ENCODE measurements at regions of chr9 and their contacts with region 1.

Region 1: GRCh38 chr9:88773627-88774244 is 217.5 kb upstream of the S1PR3 start:
- DNase-seq: no peak

Region 2: DNA sequence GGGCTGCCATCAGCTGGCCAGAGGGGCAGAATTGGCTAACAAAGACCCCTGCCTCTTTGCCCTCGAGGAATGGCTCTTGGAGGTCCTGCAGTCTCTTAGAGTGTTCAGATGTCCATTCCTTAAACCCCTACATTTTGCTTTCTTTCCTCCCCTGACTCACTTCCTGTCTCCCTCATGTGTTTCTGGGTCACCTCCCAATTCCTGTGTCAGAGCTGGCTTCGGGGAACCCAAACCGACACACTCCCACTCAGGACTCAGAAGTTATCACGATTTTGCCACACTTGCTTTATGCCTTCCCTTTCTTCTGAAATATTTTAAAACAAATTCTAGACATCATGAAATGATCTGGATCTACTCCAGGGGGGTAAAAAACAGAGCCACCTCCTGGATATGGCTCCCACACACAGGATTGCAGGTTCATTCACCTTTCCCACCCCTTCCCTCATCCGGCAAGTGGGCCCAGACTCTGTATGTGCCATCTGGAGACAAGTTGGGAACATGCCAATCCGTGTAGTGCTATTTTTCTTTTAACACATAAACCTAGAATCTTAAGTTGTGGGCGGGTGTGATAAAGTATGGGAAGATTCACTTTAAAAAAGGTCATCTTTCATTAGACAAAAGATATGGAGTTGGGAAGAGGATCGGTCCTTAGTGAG is 93.1 kb before region 1 on chr9:
- in situ Hi-C with region 1: no loop called
- DNase-seq: no peak

Region 3: DNA sequence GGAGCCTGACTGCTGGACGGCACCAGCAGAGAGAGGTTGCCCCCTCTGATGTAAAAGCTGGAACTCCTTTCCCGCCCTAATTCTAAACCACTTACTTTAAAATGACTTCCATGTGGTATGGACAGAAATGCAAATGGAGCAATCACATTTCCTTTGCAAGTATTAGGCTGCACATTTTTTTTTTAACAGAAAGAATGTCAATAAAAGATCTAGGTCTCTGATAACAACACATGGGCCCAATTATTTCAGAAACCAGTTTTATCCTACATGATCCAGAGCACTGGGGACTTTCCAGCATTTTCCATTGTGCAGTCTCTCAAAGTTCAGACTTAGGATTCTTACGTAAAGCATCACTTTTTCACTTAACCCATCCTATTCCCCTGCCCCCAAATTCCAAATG is 35.0 kb before region 1 on chr9:
- in situ Hi-C with region 1: loop called (anchors 5 kb)
- DNase-seq: no peak

Measured in G401 (cell line).